GM12878 (cell line): ENCODE measurements at regions of chr12 and their contacts with region 1.

Region 1: GRCh38 chr12:126772171-126772864 is 1494.7 kb upstream of the TMEM132C start:
- DNase-seq: peak; percentile 83
- ATAC-seq: peak; percentile 90
- H3K4me3 ChIP-seq: no peak overlapping the region
- H3K27ac ChIP-seq: peak overlapping the region; percentile 50
- H3K4me1 ChIP-seq: no peaks in the 10 kb centered on the region
- H3K27me3 ChIP-seq: no peaks in the 10 kb centered on the region
- CTCF ChIP-seq: no peak
- EP300 ChIP-seq: peak in 1 of 2 experiments; percentile 87; a peak in 3 of 4 replicates
- POLR2A ChIP-seq: no peak
- RAD21 ChIP-seq: no peak

Region 2: GRCh38 chr12:126233625-126234024 is 538.7 kb before region 1 on chr12:
- CTCF ChIA-PET with region 1: no interaction called
- POLR2A ChIA-PET with region 1: no interaction called
- RAD21 ChIA-PET with region 1: no interaction called
- SMC1A ChIA-PET with region 1: no interaction called
- in situ Hi-C with region 1: no loop called
- intact Hi-C with region 1: no loop called
- DNase-seq: no peak
- ATAC-seq: no peak
- H3K4me3 ChIP-seq: no peak overlapping the region
- H3K27ac ChIP-seq: no peak overlapping the region
- H3K4me1 ChIP-seq: no peaks in the 10 kb centered on the region
- H3K27me3 ChIP-seq: no peaks in the 10 kb centered on the region
- CTCF ChIP-seq: no peak
- EP300 ChIP-seq: no peak
- POLR2A ChIP-seq: no peak
- RAD21 ChIP-seq: no peak

Region 3: DNA sequence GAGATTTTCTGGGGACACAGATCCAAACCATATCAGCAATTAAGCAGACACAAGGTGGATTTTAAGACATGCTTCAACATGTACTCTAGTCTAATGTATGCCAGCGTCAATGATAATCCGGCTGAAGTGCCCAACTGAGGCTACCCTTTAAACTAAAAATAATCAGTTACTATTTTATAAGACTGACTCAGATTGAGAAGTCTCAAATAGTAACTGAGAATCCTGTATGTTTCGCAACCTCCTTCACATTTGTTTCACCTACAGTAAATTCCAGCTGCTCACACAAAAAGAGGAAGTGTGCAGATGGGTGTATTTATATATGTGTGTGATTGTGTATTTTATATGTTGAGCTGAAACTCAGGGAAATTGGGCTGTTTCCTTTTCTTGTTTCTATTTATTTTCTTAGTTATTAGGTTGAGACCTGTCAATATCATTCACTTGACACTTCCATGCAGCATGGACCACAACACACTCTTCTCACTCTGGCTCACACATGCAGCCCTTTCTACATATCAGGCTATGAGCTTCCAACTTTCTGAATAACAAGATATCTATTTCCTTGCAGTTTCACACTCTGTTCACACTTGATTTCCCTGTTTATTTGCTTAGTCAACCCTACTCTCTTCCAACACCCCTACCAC is 269.8 kb after region 1 on chr12:
- CTCF ChIA-PET with region 1: no interaction called
- POLR2A ChIA-PET with region 1: no interaction called
- RAD21 ChIA-PET with region 1: no interaction called
- SMC1A ChIA-PET with region 1: no interaction called
- in situ Hi-C with region 1: loop called (anchors 10 kb)
- intact Hi-C with region 1: no loop called
- DNase-seq: peak; percentile 88
- ATAC-seq: peak; percentile 94
- H3K4me3 ChIP-seq: no peak overlapping the region
- H3K27ac ChIP-seq: peak overlapping the region; percentile 78
- H3K4me1 ChIP-seq: peaks cover 18% of the 10 kb centered on the region
- H3K27me3 ChIP-seq: no peaks in the 10 kb centered on the region
- CTCF ChIP-seq: no peak
- EP300 ChIP-seq: peak; percentile 88 to 95
- POLR2A ChIP-seq: no peak
- RAD21 ChIP-seq: no peak

Region 4: GRCh38 chr12:127165567-127166392 is 393.5 kb after region 1 on chr12:
- CTCF ChIA-PET with region 1: no interaction called
- POLR2A ChIA-PET with region 1: no interaction called
- RAD21 ChIA-PET with region 1: no interaction called
- SMC1A ChIA-PET with region 1: no interaction called
- in situ Hi-C with region 1: no loop called
- intact Hi-C with region 1: no loop called
- DNase-seq: no peak
- ATAC-seq: no peak
- H3K4me3 ChIP-seq: no peak overlapping the region
- H3K27ac ChIP-seq: no peak overlapping the region
- H3K4me1 ChIP-seq: no peaks in the 10 kb centered on the region
- H3K27me3 ChIP-seq: no peaks in the 10 kb centered on the region
- CTCF ChIP-seq: no peak
- EP300 ChIP-seq: no peak
- POLR2A ChIP-seq: no peak
- RAD21 ChIP-seq: no peak